A549 (cell line): ENCODE measurements at regions of chrX and their contacts with region 1.

Region 1: DNA sequence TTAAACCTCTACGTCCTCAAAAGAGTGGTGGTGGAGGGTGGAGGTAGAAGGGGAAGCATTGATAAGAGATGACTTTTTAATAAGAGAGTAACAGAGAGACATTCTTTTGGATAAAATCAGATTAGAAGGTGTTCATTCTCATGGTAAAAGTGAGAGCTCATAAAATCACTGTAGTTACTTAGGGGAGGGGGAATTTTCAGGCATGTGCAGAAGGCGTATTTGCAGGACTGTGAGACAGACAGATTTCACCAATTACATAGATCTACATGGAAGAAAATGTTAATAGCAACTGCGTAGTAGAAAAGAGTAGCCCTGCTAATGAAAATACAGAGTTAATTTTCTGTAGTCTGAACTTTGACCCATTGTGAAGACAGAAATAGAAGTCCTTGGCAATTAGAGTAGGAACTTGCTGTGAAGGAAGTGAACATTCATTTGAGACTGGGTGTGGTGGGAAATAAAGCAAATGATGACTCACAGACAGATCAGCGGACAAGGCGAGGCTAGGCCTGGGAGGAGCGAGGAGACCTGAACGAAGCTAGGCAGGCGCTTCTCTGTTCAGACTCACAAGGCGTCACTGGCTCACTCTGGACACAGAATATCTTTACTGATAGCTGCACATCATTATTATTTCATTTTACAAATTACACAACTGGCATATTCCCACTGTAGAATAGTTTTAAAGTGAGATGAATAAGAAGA is 57.2 kb upstream of the FAM9C start:
- DNase-seq: peak; percentile 71 to 96
- ATAC-seq: peak; percentile 99
- H3K4me3 ChIP-seq: no peak overlapping the region
- H3K27ac ChIP-seq: peak overlapping the region; percentile 82 to 88
- H3K4me1 ChIP-seq: peaks cover 43% of the 10 kb centered on the region
- CTCF ChIP-seq: no peak
- EP300 ChIP-seq: peak; percentile 29 to 60; a peak in 1 of 5 replicates
- POLR2A ChIP-seq: no peak
- RAD21 ChIP-seq: peak; percentile 17 to 47; a peak in 2 of 5 replicates

Region 2: GRCh38 chrX:12974796-12975669 is 126.6 kb before region 1 on chrX and contains the start of gene TMSB4X:
- CTCF ChIA-PET with region 1: no interaction called
- POLR2A ChIA-PET with region 1: interaction called, 10 read pairs
- DNase-seq: peak; percentile 69 to 93
- ATAC-seq: peak; percentile 83 to 84
- H3K4me3 ChIP-seq: peak within 1 kb of the TSS; percentile 94
- H3K27ac ChIP-seq: peak within 1 kb of the TSS; percentile 97 to 99
- H3K4me1 ChIP-seq: peaks cover 37% of the 10 kb centered on the region
- CTCF ChIP-seq: no peak
- EP300 ChIP-seq: no peak
- POLR2A ChIP-seq: peak; percentile 99
- RAD21 ChIP-seq: peak; percentile 4 to 31; a peak in 2 of 5 replicates
- polyA plus RNA-seq, gene TMSB4X: 3,130 and 3,742 TPM in 2 replicates